Head of caudate nucleus (tissue), 42 donors: ENCODE measurements at regions of chr6 and their contacts with region 1.

Region 1: DNA sequence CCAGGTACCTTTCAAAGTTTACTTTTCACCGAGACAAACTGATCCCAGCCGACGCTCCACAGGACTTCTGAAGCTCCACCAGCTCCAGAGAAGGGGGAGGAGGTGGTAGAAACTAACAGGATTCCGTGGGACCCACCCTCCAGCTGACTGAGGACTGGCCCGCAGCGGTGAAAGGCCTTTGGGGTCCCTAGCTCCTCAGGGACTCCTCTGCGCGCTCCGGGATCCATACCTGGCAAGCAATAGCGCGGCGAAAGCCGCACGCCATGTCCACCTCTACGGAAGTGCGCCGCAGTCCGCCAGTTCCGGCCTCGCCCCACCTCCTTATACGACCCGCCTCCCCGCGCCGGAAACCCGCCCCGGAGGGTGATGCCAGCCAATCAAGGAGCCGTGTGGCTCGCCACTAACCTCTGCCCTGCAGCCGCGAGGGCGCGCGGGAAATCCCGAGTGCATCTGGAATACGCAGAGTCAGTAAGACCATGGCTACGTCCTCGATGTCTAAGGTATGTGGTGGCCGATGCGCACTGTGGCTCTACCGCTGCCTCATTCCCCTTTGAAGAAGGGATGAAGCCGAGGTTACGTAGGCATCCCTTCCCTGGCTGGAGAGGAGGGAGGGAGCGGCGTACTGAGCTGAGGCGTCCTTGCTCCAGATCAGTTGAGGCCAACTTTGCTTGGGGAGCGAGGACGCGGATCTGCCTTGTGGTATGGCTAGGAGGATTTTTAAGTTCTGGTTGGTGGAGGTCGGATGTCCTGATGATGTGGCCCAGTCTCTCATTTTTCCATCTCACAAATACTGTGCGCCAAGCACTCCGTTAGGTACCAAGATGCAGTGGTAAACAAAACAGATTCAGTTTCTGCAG is at the starts of genes ORC3 and RARS2:
- DNase-seq: peak; percentile 95 to 99 (median 98)

Region 2: DNA sequence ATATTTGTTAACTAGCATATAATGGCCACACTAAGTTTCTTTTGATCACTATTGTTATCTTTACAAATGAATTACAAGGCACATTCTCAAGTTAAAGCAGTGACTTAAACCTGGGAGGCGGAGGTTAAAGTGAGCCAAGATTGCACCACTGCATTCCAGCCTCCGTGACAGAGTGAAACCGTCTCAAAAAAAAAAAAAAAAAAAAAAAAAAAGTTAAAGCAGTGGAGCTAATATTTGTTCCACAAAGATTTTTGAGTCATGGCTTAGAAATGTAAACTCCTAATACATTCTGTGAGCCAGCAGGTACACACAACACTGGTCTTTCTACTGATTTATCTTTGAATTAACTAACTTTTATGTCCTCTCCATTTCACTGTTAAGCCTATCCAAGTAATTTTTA is 874.2 kb before region 1 on chr6:
- intact Hi-C with region 1: no loop called
- DNase-seq: no peak

Region 3: DNA sequence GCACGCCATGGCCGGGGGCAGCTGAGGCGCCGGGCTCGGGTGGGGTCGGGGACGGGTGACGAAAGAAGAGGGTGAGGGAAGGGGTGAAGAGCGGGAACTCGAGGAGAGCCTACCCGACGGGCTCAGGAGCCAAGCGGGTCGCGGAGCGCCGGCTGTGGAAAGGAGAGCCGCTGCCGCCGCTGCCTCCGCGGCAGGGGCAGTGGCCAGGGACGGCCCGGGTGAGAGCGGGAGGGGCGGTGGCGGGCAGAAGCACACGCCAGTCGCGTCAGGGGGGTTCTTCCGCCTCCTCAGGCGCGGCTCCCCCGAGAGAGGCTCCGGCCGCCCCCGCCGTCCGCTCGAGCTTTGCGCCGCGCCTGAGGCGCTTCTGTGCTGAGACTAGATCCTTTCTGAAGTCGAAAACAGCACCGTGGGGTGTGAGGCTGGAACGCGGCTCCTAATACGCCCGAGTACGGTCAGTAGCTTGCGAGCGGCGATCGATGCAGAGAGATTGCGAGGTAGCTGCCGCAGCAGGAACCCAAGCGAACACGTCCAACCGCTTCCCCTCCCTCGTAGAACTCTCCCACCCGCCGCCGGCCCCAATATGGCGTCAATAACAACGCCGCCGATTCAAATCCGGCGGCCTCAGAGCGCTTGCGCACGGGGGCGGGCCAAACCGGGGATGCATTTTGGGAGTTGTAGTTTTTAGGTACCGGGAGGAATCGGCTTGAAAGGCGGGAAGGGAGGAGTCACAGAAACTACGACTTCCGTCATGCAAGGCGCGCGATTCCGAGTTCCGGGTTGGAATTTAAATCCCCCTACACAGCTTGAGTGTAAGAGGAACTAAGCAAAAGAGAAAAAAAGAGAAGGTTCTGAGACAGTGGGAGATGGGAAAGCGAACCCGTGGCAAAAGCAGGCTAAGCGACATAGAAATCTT is 112.0 kb after region 1 on chr6 and contains the start of gene AKIRIN2:
- intact Hi-C with region 1: loop called (anchors 5 kb)
- DNase-seq: peak; percentile 91 to 99 (median 96)